Common myeloid progenitor, CD34-positive (primary cell): ENCODE measurements at regions of chr11 and their contacts with region 1.

Region 1: DNA sequence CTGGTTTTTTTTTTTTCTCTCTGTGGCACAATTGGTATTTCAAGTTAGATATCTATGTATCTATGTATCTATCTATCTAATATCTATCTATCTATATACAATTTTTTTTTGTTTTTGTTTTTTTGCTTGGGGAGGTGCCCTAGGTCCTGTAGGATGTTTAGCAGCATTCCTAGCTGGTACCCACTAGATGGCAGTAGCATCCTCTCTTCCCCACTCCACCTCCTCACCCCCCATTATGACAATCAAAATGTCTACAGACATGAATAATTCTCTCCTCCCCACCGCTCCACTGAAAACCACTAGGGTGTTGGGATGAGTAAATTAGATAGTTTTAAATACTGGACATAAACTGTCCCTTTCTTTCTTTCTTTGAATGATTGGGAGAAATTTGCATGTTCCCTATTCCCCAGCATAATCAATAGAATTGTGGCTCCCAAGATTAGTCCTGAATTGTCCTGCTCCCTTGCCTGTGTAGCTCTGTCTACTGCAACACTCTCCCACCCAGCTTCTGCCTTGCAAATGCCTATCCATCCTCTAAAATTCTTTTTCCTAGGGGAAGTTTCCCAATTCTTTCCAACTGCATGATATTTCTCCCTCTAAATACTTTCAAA is 1152.4 kb downstream of the LRRC4C start:
- DNase-seq: peak; percentile 38 to 64 (median 63)
- H3K4me3 ChIP-seq: no peak overlapping the region
- H3K27ac ChIP-seq: no peak overlapping the region
- H3K4me1 ChIP-seq: no peaks in the 10 kb centered on the region
- H3K27me3 ChIP-seq: peaks cover 0 to 2% (median 0%) of the 10 kb centered on the region in 5 experiments

Region 2: GRCh38 chr11:40293655-40294348 is 13.2 kb before region 1 on chr11:
- CTCF ChIA-PET with region 1: interaction called, 48 read pairs
- POLR2A ChIA-PET with region 1: no interaction called
- DNase-seq: peak; percentile 90 to 94 (median 94)
- H3K4me3 ChIP-seq: peak overlapping the region; percentile 47 to 94 (median 86)
- H3K27ac ChIP-seq: peak overlapping the region; percentile 41 to 59
- H3K4me1 ChIP-seq: peaks cover 0 to 46% (median 22%) of the 10 kb centered on the region in 4 experiments
- H3K27me3 ChIP-seq: peaks cover 0 to 12% (median 0%) of the 10 kb centered on the region in 5 experiments

Region 3: DNA sequence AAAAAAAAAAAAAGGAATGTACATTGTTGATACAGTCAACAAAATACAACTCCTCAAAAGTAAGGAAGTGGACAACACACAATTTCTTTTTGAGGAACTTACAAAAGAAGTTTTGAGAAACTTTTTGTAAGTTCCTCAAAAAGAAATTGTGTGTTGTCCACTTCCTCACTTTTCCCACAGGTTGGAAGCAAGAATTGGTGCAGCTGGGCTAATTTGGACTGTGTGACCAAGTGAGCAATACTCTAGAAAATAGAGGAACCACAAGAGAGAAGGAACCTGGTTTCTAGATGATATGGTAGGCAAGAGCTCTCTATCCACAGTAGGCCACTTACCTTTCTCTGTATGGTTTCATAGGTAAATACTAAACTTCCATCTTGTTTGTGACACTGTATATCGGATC is 98.6 kb after region 1 on chr11:
- CTCF ChIA-PET with region 1: no interaction called
- POLR2A ChIA-PET with region 1: no interaction called
- DNase-seq: no peak
- H3K4me3 ChIP-seq: no peak overlapping the region
- H3K27ac ChIP-seq: no peak overlapping the region
- H3K4me1 ChIP-seq: no peaks in the 10 kb centered on the region
- H3K27me3 ChIP-seq: no peaks in the 10 kb centered on the region

Region 4: GRCh38 chr11:40514124-40514523 is 207.1 kb after region 1 on chr11:
- CTCF ChIA-PET with region 1: no interaction called
- POLR2A ChIA-PET with region 1: no interaction called
- DNase-seq: no peak
- H3K4me3 ChIP-seq: no peak overlapping the region
- H3K27ac ChIP-seq: no peak overlapping the region
- H3K4me1 ChIP-seq: no peaks in the 10 kb centered on the region
- H3K27me3 ChIP-seq: no peaks in the 10 kb centered on the region